ENCODE measurements at regions of chr17 and their contacts with region 1.

Region 1: DNA sequence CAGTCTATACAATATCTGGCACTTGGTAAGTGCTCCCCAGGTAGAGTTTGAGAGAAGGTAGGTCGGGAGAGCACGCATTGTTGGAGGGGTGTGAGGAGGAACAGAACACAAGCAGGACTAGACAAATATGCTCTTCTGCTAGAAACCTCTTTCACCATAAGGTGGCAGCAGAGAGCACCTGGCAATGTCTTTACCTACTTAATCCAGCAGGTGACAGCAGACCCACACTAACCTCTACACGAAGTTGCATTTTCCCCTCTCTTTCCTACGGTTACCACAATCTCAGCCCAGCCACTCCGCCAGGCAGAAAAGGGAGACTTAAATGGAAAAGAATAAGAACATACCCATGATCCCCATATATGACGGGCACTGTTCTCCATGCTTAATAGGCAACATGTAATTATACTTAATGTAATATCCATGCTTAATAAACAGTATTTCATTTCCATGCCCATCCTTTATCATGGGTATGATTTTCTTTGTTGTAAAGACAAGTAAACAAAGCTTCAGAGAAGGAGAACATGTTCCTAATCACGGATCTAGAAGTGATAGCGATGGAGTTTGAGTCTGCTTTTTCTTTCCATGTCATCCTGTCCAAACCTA is 55.1 kb upstream of the CCL2 start:
- DNase-seq: peak; percentile 71 to 94 (median 81)
- H3K4me3 ChIP-seq: no peak overlapping the region
- H3K27ac ChIP-seq: no peak overlapping the region
- H3K4me1 ChIP-seq: no peaks in the 10 kb centered on the region
- H3K27me3 ChIP-seq: peaks cover 12% of the 10 kb centered on the region
- CTCF ChIP-seq: peak; percentile 98 to 100 (median 100)
- POLR2A ChIP-seq: no peak

Region 2: DNA sequence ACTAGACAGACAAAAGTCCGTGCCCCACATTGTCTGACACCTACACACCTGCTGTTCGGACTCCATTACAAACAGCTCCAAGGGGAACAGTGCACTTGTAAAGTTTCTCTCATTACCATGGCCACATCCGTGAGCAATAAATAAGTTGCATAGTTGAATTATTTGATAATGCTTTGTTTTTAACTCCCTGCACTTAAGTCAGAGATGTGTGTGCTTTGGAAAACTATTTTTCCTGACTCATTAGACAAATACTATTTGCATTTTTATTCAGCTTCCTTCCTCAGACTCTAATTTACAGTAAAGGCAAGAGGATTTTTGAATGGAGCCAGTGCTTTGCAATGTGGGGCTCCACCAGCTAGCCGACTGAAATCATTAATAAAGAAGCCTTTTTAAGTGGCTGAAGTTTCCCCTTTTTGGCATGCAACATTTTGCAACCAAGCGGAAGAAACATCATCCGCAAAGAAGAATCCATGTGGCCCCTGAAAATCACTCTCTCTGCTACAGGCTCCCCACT is 48.5 kb after region 1 on chr17:
- intact Hi-C with region 1: loop called in 1 of 2 experiments (anchors 2 kb)
- DNase-seq: no peak
- H3K4me3 ChIP-seq: no peak overlapping the region
- H3K27ac ChIP-seq: peak overlapping the region in 4 of 5 donors; percentile 49 to 84 (median 65)
- H3K4me1 ChIP-seq: peaks cover 50 to 61% of the 10 kb centered on the region in 2 donors
- H3K27me3 ChIP-seq: no peaks in the 10 kb centered on the region
- CTCF ChIP-seq: no peak
- POLR2A ChIP-seq: no peak

Region 3: GRCh38 chr17:34306466-34306865 is 106.4 kb after region 1 on chr17:
- intact Hi-C with region 1: loop called in 1 of 2 experiments (anchors 2 kb)
- DNase-seq: peak; percentile 34 to 70 (median 58)
- H3K4me3 ChIP-seq: no peak overlapping the region
- H3K27ac ChIP-seq: no peak overlapping the region
- H3K4me1 ChIP-seq: peaks cover 0 to 4% of the 10 kb centered on the region in 2 donors
- H3K27me3 ChIP-seq: no peaks in the 10 kb centered on the region
- CTCF ChIP-seq: peak; percentile 25 to 89 (median 72)
- POLR2A ChIP-seq: no peak

Region 4: GRCh38 chr17:34361478-34362061 is 161.5 kb after region 1 on chr17:
- intact Hi-C with region 1: loop called (anchors 5 kb)
- DNase-seq: peak; percentile 85 to 96 (median 87)
- H3K4me3 ChIP-seq: no peak overlapping the region
- H3K27ac ChIP-seq: no peak overlapping the region
- H3K4me1 ChIP-seq: peaks cover 0 to 3% of the 10 kb centered on the region in 2 donors
- H3K27me3 ChIP-seq: no peaks in the 10 kb centered on the region
- CTCF ChIP-seq: peak; percentile 97 to 100 (median 100)
- POLR2A ChIP-seq: no peak

Measured in adrenal gland (tissue), 19 donors.